Activated T-helper 2 cell treated with anti-CD3 and anti-CD28 coated beads, Interferon-gamma antibody, Interleukin-2, Interleukin-4, amounts not matched to agents 10 μg/mL and 5 μg/mL and 100 μg/mL, durations not matched to agents 14 hours and 24 hours and 36 hours (primary cell): ENCODE measurements at regions of chr5 and their contacts with region 1.

Region 1: DNA sequence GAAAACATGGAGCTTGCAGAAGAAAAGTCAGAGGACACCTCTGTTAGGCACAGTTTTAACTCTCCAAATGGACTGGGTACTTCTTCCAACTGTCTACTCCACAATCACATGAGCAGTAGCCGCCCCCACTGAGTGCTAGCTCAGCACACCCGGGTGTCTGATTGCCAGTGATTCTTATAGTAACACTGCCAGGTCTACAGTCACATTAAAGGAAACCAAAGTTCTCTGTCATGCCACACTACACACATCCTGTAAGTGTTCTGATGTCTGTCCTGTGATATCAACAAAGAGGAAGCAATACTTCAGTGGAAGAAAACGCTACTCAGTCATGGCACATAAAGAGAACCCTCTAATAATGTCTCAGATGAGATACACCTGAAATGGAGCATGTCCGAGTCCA is at the start of gene HAVCR2:
- DNase-seq: peak; percentile 63
- H3K4me3 Mint-ChIP-seq: peak within 1 kb of the TSS; percentile 88
- H3K27ac Mint-ChIP-seq: peak within 1 kb of the TSS; percentile 99
- H3K4me1 Mint-ChIP-seq: peaks cover 57% of the 10 kb centered on the region
- H3K27me3 Mint-ChIP-seq: no peaks in the 10 kb centered on the region
- total RNA-seq, gene HAVCR2: 48.6 and 50.5 TPM in 2 replicates

Region 2: DNA sequence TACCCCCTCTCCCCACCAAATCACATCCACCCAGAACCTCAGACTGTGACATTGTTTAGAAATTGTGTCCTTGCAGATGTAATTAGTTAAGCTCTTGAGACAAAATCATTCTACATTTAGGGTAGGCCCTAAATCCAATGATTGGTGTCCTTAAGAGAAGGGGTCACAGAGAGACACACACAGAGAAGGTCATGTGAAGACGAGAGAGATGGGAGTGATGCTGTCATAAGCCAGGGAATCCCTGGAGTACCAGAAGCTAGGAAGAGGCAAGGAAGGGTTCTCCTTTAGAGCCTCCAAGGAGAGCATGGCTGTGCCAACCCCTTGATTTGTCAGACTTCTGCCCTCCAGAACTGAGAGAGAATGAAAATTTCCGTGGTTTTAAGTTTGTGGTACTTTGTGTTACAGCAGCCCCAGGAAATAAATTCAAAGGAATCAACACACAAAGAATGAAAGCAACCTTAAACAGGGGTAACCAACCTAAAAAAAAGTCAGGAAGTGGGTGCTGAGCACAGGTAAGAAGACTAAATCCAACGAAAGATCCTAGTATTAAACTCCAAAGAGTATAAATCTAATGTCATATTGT is 179.5 kb before region 1 on chr5:
- intact Hi-C with region 1: loop called (anchors 2 kb)
- DNase-seq: no peak
- H3K4me3 Mint-ChIP-seq: no peak overlapping the region
- H3K27ac Mint-ChIP-seq: peak overlapping the region; percentile 89
- H3K4me1 Mint-ChIP-seq: peaks cover 63% of the 10 kb centered on the region
- H3K27me3 Mint-ChIP-seq: no peaks in the 10 kb centered on the region

Region 3: GRCh38 chr5:157033071-157033583 is 75.8 kb before region 1 on chr5:
- intact Hi-C with region 1: loop called (anchors 1 kb)
- DNase-seq: no peak
- H3K4me3 Mint-ChIP-seq: no peak overlapping the region
- H3K27ac Mint-ChIP-seq: peak overlapping the region; percentile 80
- H3K4me1 Mint-ChIP-seq: peaks cover 65% of the 10 kb centered on the region
- H3K27me3 Mint-ChIP-seq: no peaks in the 10 kb centered on the region

Region 4: DNA sequence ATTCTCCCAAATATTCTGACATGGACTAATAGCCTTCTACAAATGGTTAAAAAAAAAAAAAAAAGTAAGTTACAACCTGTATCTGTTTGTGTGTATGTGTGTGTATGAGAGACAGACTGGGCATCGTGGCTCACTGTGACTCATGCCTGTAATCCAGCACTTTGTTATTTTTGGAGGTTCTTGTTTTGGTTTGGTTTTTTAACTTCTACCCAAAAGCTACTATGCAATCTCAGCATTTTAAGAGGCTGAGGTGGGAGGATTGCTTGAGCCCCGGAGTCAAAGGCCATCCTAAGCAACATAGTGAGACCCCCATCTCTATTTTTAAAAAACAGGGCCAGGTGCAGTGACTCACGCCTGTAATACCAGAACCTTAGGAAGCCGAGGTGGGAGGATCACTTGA is 32.4 kb before region 1 on chr5:
- intact Hi-C with region 1: loop called (anchors 1 kb)
- DNase-seq: no peak
- H3K4me3 Mint-ChIP-seq: no peak overlapping the region
- H3K27ac Mint-ChIP-seq: no peak overlapping the region
- H3K4me1 Mint-ChIP-seq: peaks cover 37% of the 10 kb centered on the region
- H3K27me3 Mint-ChIP-seq: no peaks in the 10 kb centered on the region

Region 5: DNA sequence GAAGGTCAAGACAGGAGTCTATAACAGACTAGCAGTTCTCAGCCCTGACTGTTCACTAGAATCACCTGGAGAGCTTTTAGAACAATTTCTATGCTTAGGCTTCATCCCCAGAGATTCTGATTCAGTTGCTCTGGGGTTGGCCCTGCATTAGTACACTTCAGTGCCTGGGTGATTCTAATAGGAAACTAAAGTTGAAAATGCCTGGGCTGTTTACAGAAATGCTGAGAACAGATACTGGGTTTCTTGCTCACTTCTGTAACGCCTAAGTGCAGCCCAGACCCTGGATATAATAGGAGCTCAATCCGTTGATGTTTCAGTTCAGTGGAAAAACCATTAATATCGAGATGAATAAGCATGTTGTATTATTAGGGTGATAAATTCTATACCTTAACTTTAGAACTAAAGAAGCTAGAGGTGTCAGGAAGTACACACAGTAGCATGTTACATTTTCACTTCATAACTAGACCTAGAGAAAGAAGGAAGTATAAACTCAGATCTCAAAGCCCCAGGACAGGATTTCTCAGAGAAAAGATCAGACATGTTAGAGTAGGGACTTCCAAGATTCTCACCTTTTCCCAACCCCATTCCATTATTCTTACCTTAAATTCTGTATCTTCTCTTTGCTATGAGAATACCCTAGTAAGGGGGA is 20.5 kb before region 1 on chr5:
- intact Hi-C with region 1: no loop called
- DNase-seq: no peak
- H3K4me3 Mint-ChIP-seq: no peak overlapping the region
- H3K27ac Mint-ChIP-seq: no peak overlapping the region
- H3K4me1 Mint-ChIP-seq: peaks cover 6% of the 10 kb centered on the region
- H3K27me3 Mint-ChIP-seq: no peaks in the 10 kb centered on the region

Region 6: DNA sequence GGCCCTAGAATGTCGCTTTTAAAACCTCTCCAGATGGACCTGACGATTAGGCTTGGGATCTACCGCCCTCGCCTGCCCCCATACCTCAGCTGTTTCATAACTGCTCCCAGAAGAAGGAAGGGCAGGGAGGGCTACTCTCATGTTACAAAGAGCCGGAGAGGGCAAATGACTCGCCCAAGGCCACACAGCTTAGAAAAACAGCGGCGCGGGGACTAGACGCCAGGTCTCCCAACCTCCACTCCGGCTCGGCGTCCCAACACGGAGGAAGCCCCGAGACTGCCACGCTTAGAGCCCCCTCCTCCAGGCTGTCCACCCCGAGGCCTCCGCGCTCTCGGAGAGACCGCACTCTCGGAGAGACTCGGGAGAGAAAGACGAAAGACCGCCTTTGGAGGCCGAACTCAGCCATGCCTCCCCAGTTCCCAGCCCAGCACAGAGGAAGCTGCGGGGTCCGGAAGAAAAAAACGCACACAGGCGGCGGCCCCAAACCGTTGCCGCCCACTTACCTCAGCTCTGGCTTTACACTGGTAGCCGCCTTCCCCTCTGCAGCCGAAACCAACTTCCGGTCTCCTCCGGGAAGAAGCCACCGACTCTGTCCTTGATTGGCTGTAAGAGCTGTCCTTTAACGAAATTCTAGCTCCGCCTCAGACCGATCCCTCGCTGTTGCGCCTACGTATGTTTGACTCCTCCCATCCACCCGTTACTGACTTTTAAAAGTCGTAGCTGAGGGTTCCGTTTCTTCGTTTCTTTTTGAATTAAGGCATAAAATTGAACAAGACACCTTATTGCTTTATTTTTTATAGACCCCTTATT is 33.5 kb after region 1 on chr5 and contains the start of gene MED7:
- intact Hi-C with region 1: loop called (anchors 1 kb)
- DNase-seq: peak; percentile 95
- H3K4me3 Mint-ChIP-seq: peak within 1 kb of the TSS; percentile 97
- H3K27ac Mint-ChIP-seq: peak within 1 kb of the TSS; percentile 97
- H3K4me1 Mint-ChIP-seq: peaks cover 31% of the 10 kb centered on the region
- H3K27me3 Mint-ChIP-seq: no peaks in the 10 kb centered on the region
- total RNA-seq, gene MED7: 12.5 and 13.1 TPM in 2 replicates

Region 7: GRCh38 chr5:157204765-157205164 is 95.8 kb after region 1 on chr5:
- intact Hi-C with region 1: no loop called
- DNase-seq: no peak
- H3K4me3 Mint-ChIP-seq: peak overlapping the region; percentile 2
- H3K27ac Mint-ChIP-seq: peak overlapping the region; percentile 62
- H3K4me1 Mint-ChIP-seq: peaks cover 70% of the 10 kb centered on the region
- H3K27me3 Mint-ChIP-seq: no peaks in the 10 kb centered on the region

Region 8: DNA sequence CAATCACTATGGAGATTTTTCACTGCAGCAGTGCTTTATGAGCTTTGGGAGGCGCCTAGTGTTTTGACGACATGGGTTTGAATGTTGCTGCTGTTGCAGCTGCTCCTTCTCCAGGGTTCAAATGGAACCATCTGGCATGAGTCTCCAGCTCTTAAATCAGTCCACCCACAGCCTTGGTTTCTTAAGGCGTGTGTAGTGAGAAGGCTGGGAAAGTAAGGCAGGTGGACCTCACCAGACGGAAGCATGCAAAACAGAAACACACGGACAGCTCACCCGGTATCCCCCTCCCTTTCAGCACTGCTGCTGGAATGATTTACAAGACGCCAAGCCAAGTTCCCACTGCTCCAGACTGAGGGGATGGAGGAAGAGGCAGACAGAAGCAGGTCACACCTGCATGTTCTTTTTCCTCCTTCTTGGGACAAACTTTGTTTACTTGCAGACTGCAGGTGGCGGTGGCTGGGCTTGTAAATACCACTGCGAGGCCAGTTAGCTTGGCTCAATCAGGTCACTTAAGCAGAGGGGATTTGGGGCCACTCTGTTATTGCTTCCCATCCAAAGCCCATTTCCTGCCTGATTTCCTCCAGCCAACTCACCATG is 419.2 kb after region 1 on chr5:
- intact Hi-C with region 1: no loop called
- DNase-seq: no peak
- H3K4me3 Mint-ChIP-seq: no peak overlapping the region
- H3K27ac Mint-ChIP-seq: no peak overlapping the region
- H3K4me1 Mint-ChIP-seq: peaks cover 48% of the 10 kb centered on the region
- H3K27me3 Mint-ChIP-seq: no peaks in the 10 kb centered on the region